ENCODE measurements at regions of chr18 and their contacts with region 1.

Region 1: DNA sequence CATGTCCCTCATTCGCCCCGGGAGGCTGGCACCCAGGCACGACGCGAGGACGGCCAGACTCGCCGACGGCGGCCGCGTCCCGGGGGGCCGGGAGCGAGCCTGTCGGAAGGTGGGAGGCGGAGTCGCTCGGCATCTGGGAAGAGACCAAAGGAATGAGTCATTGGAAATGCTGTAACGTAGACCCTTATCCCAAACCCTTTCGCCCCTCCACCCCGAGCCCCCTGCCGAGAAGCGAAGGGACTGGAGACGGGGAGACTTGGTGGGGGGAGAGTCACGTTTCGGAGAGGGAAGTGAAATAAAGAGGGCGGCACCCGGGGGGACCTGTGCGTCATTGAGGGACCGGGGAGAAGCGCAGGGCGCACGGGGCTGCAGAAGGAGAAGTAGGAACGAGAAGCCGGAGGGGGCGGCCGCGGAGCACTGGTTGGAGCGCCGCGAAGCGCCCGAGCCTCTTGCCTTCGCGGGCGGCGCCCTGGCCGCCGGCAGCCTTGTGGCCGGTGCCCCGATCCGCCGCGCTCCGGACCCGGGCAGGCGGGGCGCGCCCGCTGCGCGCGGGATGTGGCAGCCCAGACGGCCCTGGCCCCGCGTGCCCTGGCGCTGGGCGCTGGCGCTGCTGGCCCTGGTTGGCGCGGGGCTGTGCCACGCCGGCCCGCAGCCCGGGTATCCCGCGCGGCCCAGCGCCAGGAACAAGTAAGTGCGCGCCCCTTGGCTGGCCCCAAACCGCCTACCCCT is at the start of gene EMILIN2:
- DNase-seq: peak; percentile 93 to 96 (median 95)
- H3K4me3 ChIP-seq: peak within 1 kb of the TSS; percentile 97 to 99 (median 97)
- H3K4me3 Mint-ChIP-seq: peak within 1 kb of the TSS; percentile 96 to 97
- H3K27ac ChIP-seq: peak within 1 kb of the TSS; percentile 91 to 98
- H3K27ac Mint-ChIP-seq: peak within 1 kb of the TSS; percentile 95 to 99 (median 97)
- H3K4me1 ChIP-seq: peaks cover 65 to 73% of the 10 kb centered on the region in 2 donors
- H3K4me1 Mint-ChIP-seq: peaks cover 65% of the 10 kb centered on the region
- H3K27me3 ChIP-seq: no peaks in the 10 kb centered on the region
- H3K27me3 Mint-ChIP-seq: no peaks in the 10 kb centered on the region
- CTCF ChIP-seq: no peak
- polyA plus RNA-seq, gene EMILIN2: 30.5 to 43.2 (median 33.8) TPM

Region 2: DNA sequence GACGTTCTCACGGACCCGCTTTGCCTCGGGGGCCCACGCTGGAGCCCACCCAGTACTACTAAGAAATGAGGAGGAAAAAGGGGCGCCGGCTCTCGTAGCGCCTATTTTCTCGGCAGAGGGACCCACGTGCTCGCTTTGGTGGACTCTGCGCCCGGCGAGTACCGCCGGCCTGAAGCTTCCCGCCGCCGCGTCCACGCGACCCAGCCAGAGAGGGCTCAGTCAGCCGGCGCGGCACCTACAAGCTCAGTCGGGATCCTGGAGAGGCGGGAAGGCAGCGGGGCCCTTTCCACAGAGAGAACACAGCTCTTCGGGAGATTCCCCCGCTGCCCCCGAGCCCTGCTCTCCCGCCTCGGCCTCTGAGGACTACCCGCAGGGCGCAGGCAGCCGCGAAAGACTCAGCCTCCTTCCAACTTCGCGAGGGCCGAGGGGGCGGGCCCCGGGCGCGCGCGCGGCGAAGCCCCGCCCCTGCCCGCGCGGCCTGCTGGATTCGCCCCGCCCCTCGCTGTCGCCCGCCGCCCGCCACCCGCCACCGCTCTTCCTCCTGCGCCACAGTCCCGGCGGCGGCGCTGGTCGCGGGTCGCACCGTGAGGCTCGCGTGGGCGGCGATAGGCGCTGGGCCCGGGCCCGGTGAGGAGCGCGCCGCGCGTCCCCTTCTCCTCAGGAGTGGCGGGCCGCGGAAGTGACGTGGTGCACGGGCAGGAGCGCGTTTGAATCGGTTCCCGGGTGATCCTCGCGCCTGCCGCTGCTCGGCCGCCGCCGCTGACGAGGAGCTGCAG is 191.4 kb before region 1 on chr18 and contains the start of gene SMCHD1:
- intact Hi-C with region 1: loop called (anchors 5 to 10 kb)
- DNase-seq: peak; percentile 74 to 85 (median 76)
- H3K4me3 ChIP-seq: peak within 1 kb of the TSS; percentile 78 to 100 (median 86)
- H3K4me3 Mint-ChIP-seq: peak within 1 kb of the TSS; percentile 95
- H3K27ac ChIP-seq: peak within 1 kb of the TSS; percentile 98
- H3K27ac Mint-ChIP-seq: peak within 1 kb of the TSS; percentile 96 to 98 (median 97)
- H3K4me1 ChIP-seq: peaks cover 60 to 73% of the 10 kb centered on the region in 2 donors
- H3K4me1 Mint-ChIP-seq: peaks cover 57% of the 10 kb centered on the region
- H3K27me3 ChIP-seq: no peaks in the 10 kb centered on the region
- H3K27me3 Mint-ChIP-seq: peaks cover 0 to 5% (median 0%) of the 10 kb centered on the region in 3 donors
- CTCF ChIP-seq: no peak
- polyA plus RNA-seq, gene SMCHD1: 12.7 to 45.5 (median 16.8) TPM

Region 3: DNA sequence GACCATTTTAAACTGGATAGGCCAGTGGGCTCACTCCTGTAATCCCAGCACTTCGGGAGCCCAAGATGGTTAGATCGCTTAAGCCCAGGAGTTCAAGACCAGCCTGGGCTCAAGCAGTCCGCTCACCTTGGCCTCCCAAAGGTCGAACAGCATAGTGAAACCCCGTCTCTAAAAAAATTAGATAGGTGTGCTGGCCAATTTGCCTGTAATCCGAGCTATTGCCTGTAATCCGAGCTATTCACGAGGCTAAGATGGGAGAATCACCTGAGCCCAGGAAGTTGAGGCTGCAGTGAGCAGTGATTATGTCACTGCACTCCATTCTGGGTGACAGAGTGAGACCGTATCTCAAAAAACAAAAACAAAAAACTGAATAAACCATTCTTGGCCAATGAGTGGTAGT is 52.6 kb before region 1 on chr18:
- intact Hi-C with region 1: loop called in 1 of 2 experiments (anchors 5 kb)
- DNase-seq: no peak
- H3K4me3 ChIP-seq: no peak overlapping the region
- H3K4me3 Mint-ChIP-seq: no peak overlapping the region
- H3K27ac ChIP-seq: peak overlapping the region in 1 of 2 donors; percentile 42
- H3K27ac Mint-ChIP-seq: peak overlapping the region in 1 of 7 donors; percentile 72
- H3K4me1 ChIP-seq: no peaks in the 10 kb centered on the region
- H3K4me1 Mint-ChIP-seq: no peaks in the 10 kb centered on the region
- H3K27me3 ChIP-seq: no peaks in the 10 kb centered on the region
- H3K27me3 Mint-ChIP-seq: no peaks in the 10 kb centered on the region
- CTCF ChIP-seq: no peak

Region 4: GRCh38 chr18:2857491-2858131 is 10.8 kb after region 1 on chr18:
- intact Hi-C with region 1: loop called in 1 of 2 experiments (anchors 1 kb)
- DNase-seq: peak; percentile 88 to 93 (median 91)
- H3K4me3 ChIP-seq: peak overlapping the region in 2 of 3 experiments; percentile 2 to 71
- H3K4me3 Mint-ChIP-seq: peak overlapping the region; percentile 41 to 74
- H3K27ac ChIP-seq: peak overlapping the region; percentile 96 to 98
- H3K27ac Mint-ChIP-seq: peak overlapping the region; percentile 96 to 99 (median 97)
- H3K4me1 ChIP-seq: peaks cover 61 to 66% of the 10 kb centered on the region in 2 donors
- H3K4me1 Mint-ChIP-seq: peaks cover 86% of the 10 kb centered on the region
- H3K27me3 ChIP-seq: no peaks in the 10 kb centered on the region
- H3K27me3 Mint-ChIP-seq: peaks cover 0 to 1% (median 0%) of the 10 kb centered on the region in 3 donors
- CTCF ChIP-seq: no peak

Region 5: GRCh38 chr18:2898186-2898640 is 51.4 kb after region 1 on chr18:
- intact Hi-C with region 1: loop called in 1 of 2 experiments (anchors 5 kb)
- DNase-seq: peak; percentile 35 to 84 (median 68)
- H3K4me3 ChIP-seq: no peak overlapping the region
- H3K4me3 Mint-ChIP-seq: no peak overlapping the region
- H3K27ac ChIP-seq: peak overlapping the region; percentile 70 to 72
- H3K27ac Mint-ChIP-seq: peak overlapping the region; percentile 68 to 90 (median 75)
- H3K4me1 ChIP-seq: peaks cover 32 to 35% of the 10 kb centered on the region in 2 donors
- H3K4me1 Mint-ChIP-seq: peaks cover 35% of the 10 kb centered on the region
- H3K27me3 ChIP-seq: no peaks in the 10 kb centered on the region
- H3K27me3 Mint-ChIP-seq: no peaks in the 10 kb centered on the region
- CTCF ChIP-seq: no peak

Region 6: GRCh38 chr18:2908946-2909335 is 62.1 kb after region 1 on chr18:
- intact Hi-C with region 1: no loop called
- DNase-seq: no peak
- H3K4me3 ChIP-seq: no peak overlapping the region
- H3K4me3 Mint-ChIP-seq: no peak overlapping the region
- H3K27ac ChIP-seq: peak overlapping the region in 1 of 2 donors; percentile 58
- H3K27ac Mint-ChIP-seq: peak overlapping the region in 3 of 7 donors; percentile 8 to 54 (median 46)
- H3K4me1 ChIP-seq: peaks cover 12 to 31% of the 10 kb centered on the region in 2 donors
- H3K4me1 Mint-ChIP-seq: peaks cover 20% of the 10 kb centered on the region
- H3K27me3 ChIP-seq: no peaks in the 10 kb centered on the region
- H3K27me3 Mint-ChIP-seq: no peaks in the 10 kb centered on the region
- CTCF ChIP-seq: no peak

Region 7: DNA sequence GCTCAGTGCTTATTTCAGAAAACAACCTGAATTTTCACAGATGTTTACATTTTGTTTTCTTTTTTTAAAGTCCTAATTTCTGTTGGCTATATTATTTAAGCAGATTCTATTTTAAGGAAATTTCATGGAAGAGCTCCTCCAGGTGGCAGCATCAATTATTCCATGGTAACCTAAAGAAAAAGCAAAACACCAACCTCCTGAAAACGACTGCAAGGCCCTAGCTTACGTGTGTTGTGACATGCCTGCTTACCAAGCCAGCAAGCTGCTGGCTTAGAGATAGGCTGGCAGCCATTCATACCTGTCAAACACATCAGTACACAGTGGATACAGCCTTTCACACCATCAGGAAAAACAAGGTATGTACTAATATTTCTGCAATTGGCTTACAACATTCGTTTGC is 101.2 kb after region 1 on chr18:
- intact Hi-C with region 1: no loop called
- DNase-seq: no peak
- H3K4me3 ChIP-seq: no peak overlapping the region
- H3K4me3 Mint-ChIP-seq: no peak overlapping the region
- H3K27ac ChIP-seq: peak overlapping the region in 1 of 2 donors; percentile 33
- H3K27ac Mint-ChIP-seq: no peak overlapping the region
- H3K4me1 ChIP-seq: no peaks in the 10 kb centered on the region
- H3K4me1 Mint-ChIP-seq: peaks cover 2% of the 10 kb centered on the region
- H3K27me3 ChIP-seq: no peaks in the 10 kb centered on the region
- H3K27me3 Mint-ChIP-seq: no peaks in the 10 kb centered on the region
- CTCF ChIP-seq: no peak

Region 8: DNA sequence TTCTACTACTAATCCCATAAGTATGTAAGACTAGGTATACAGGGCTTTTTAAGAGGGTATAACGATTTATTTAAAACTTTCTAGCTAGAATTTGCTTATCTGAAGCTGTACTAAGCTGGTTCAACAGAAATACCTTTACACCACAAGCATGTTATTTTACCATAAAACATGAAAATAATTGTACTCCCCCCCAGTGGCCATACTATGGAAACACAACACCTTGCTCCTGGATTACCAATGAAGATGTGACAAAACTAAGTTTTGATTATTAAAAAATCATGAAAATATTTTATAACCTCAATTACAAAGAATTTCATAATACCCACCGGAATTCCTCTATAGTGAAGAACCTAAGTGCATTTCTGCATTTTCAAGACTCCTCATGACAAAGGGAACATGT is 138.8 kb after region 1 on chr18:
- intact Hi-C with region 1: loop called in 1 of 2 experiments (anchors 10 kb)
- DNase-seq: peak in 2 of 3 donors; percentile 38 to 55
- H3K4me3 ChIP-seq: no peak overlapping the region
- H3K4me3 Mint-ChIP-seq: no peak overlapping the region
- H3K27ac ChIP-seq: no peak overlapping the region
- H3K27ac Mint-ChIP-seq: no peak overlapping the region
- H3K4me1 ChIP-seq: peaks cover 35 to 59% of the 10 kb centered on the region in 2 donors
- H3K4me1 Mint-ChIP-seq: peaks cover 54% of the 10 kb centered on the region
- H3K27me3 ChIP-seq: no peaks in the 10 kb centered on the region
- H3K27me3 Mint-ChIP-seq: peaks cover 0 to 1% (median 0%) of the 10 kb centered on the region in 3 donors
- CTCF ChIP-seq: peak; percentile 83

Region 9: GRCh38 chr18:3012964-3013804 is 166.4 kb after region 1 on chr18 and contains the start of gene LPIN2:
- intact Hi-C with region 1: loop called in 1 of 2 experiments (anchors 10 kb)
- DNase-seq: peak; percentile 95 to 97 (median 96)
- H3K4me3 ChIP-seq: peak within 1 kb of the TSS; percentile 53 to 85 (median 73)
- H3K4me3 Mint-ChIP-seq: peak within 1 kb of the TSS; percentile 91 to 96
- H3K27ac ChIP-seq: peak within 1 kb of the TSS; percentile 76 to 88
- H3K27ac Mint-ChIP-seq: peak within 1 kb of the TSS; percentile 88 to 94 (median 93)
- H3K4me1 ChIP-seq: peaks cover 80 to 93% of the 10 kb centered on the region in 2 donors
- H3K4me1 Mint-ChIP-seq: peaks cover 83% of the 10 kb centered on the region
- H3K27me3 ChIP-seq: no peaks in the 10 kb centered on the region
- H3K27me3 Mint-ChIP-seq: no peaks in the 10 kb centered on the region
- CTCF ChIP-seq: no peak
- polyA plus RNA-seq, gene LPIN2: 9.3 to 16.3 (median 10.3) TPM

Region 10: GRCh38 chr18:3441290-3441689 is 594.5 kb after region 1 on chr18:
- intact Hi-C with region 1: no loop called
- DNase-seq: peak in 2 of 3 donors; percentile 47 to 52
- H3K4me3 ChIP-seq: no peak overlapping the region
- H3K4me3 Mint-ChIP-seq: no peak overlapping the region
- H3K27ac ChIP-seq: no peak overlapping the region
- H3K27ac Mint-ChIP-seq: peak overlapping the region in 1 of 7 donors; percentile 7
- H3K4me1 ChIP-seq: peaks cover 8 to 11% of the 10 kb centered on the region in 2 donors
- H3K4me1 Mint-ChIP-seq: peaks cover 12% of the 10 kb centered on the region
- H3K27me3 ChIP-seq: peaks cover 0 to 3% of the 10 kb centered on the region in 2 donors
- H3K27me3 Mint-ChIP-seq: peaks cover 0 to 4% (median 1%) of the 10 kb centered on the region in 3 donors
- CTCF ChIP-seq: peak; percentile 31

Measured in CD14-positive monocyte (primary cell).